ENCODE measurements at regions of chr19 and their contacts with region 1.

Region 1: DNA sequence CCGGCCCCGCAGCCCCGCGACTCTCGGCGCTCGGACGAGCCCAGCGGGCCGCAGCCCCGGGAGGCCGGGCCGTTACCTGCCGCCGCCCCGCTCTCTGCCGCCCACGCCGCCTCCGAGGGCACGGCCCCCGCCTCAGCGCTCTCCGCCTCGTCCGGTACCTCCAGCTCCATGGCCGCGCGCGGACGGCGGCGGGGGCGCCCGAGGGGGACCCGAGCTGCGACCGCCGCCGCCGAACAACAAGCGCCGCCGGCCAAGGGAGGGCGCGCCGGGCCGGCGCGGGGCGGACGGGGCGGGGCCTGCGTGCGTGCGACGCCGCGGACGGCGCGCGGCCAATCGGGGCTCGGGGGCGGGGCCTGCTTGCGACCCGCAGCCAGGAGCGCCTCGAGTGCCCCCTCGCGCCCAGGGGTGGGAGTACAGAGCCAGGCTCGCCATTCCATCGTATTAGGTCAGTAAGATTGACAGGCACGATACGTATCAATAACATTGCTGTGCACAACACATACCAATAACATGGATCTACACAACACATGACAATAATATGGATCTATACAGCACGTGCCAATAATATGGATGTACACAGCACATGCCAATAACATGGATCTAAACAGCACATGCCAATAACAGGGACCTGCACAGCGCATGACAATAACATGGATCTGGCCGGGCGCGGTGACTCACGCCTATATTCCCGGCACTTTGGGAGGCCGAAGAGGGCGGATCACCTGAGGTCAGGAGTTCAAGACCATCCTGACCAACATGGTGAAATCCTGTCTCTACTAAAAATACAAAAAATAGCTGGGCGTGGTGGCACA is at the start of gene PIP5K1C:
- DNase-seq: peak; percentile 47
- ATAC-seq: peak; percentile 85
- H3K4me3 ChIP-seq: peak within 1 kb of the TSS; percentile 88
- H3K27ac ChIP-seq: peak within 1 kb of the TSS; percentile 69
- H3K4me1 ChIP-seq: no peaks in the 10 kb centered on the region; the same call in 1 of the 2 replicates
- H3K27me3 ChIP-seq: no peaks in the 10 kb centered on the region
- CTCF ChIP-seq: peak; percentile 74 to 94 (median 78)
- EP300 ChIP-seq: no peak
- POLR2A ChIP-seq: peak; percentile 47; the same call in 1 of the 2 replicates
- RAD21 ChIP-seq: peak; percentile 78
- polyA plus RNA-seq, gene PIP5K1C: 0.39 to 0.46 TPM

Region 2: DNA sequence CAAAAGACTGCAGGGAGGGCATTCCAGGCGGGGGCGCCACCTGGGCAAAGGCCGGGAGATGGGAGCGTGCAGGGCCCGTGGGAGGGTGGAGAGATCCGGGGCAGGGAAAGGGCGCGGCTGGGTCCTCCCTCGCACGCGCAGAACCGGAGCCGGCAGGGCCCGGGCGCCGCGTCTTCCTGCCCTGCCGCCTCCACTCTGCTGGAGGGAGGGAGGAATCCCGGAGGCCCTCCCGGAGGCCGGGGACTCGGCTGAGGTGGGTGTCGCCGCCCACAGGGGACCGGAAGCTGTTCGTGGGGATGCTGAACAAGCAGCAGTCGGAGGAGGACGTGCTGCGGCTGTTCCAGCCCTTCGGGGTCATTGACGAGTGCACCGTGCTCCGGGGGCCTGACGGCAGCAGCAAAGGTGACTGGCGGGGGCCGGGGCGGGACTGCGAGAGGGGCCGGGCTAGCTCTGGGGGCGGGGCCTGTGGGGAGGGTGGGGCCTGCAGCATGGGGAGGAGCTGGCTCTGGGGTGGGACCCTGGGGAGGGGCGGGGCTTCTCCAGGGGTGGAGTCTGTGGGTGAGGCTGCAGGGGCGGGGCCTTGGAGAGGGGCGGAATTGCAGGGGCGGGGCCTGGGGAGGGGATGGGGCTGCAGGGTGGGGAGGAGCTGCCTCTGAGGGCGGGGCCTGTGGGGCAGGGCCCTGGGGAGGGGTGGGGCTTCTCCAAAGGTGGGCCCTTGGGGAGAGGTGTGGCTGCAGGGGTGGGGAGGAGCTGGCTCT is 424.7 kb before region 1 on chr19:
- CTCF ChIA-PET with region 1: no interaction called
- POLR2A ChIA-PET with region 1: no interaction called
- RAD21 ChIA-PET with region 1: no interaction called
- SMC1A ChIA-PET with region 1: no interaction called
- in situ Hi-C with region 1: no loop called
- intact Hi-C with region 1: no loop called
- DNase-seq: peak; percentile 23
- ATAC-seq: peak; percentile 90
- H3K4me3 ChIP-seq: peak overlapping the region; percentile 71
- H3K27ac ChIP-seq: no peak overlapping the region
- H3K4me1 ChIP-seq: peaks cover 6% of the 10 kb centered on the region
- H3K27me3 ChIP-seq: no peaks in the 10 kb centered on the region
- CTCF ChIP-seq: peak in 2 of 3 experiments; percentile 54 to 59; a peak in 3 of 6 replicates
- EP300 ChIP-seq: no peak
- POLR2A ChIP-seq: peak; percentile 46; the same call in 1 of the 2 replicates
- RAD21 ChIP-seq: no peak

Region 3: GRCh38 chr19:3660493-3661219 is 39.8 kb before region 1 on chr19:
- CTCF ChIA-PET with region 1: interaction called, 22 read pairs
- POLR2A ChIA-PET with region 1: no interaction called
- RAD21 ChIA-PET with region 1: interaction called, 6 read pairs
- SMC1A ChIA-PET with region 1: no interaction called
- in situ Hi-C with region 1: loop called (anchors 5 kb)
- intact Hi-C with region 1: no loop called
- DNase-seq: no peak
- ATAC-seq: no peak
- H3K4me3 ChIP-seq: no peak overlapping the region
- H3K27ac ChIP-seq: no peak overlapping the region
- H3K4me1 ChIP-seq: peaks cover 9% of the 10 kb centered on the region
- H3K27me3 ChIP-seq: no peaks in the 10 kb centered on the region
- CTCF ChIP-seq: no peak
- EP300 ChIP-seq: no peak
- POLR2A ChIP-seq: no peak
- RAD21 ChIP-seq: no peak

Region 4: GRCh38 chr19:3665681-3666544 is 34.5 kb before region 1 on chr19:
- CTCF ChIA-PET with region 1: interaction called, 22 read pairs
- POLR2A ChIA-PET with region 1: interaction called, 5 read pairs
- RAD21 ChIA-PET with region 1: interaction called, 6 read pairs
- SMC1A ChIA-PET with region 1: no interaction called
- in situ Hi-C with region 1: loop called (anchors 5 kb)
- intact Hi-C with region 1: no loop called
- DNase-seq: no peak
- ATAC-seq: peak; percentile 96
- H3K4me3 ChIP-seq: no peak overlapping the region
- H3K27ac ChIP-seq: no peak overlapping the region; the same call in 1 of the 2 replicates
- H3K4me1 ChIP-seq: peaks cover 11% of the 10 kb centered on the region
- H3K27me3 ChIP-seq: no peaks in the 10 kb centered on the region
- CTCF ChIP-seq: peak; percentile 82 to 97 (median 94)
- EP300 ChIP-seq: no peak
- POLR2A ChIP-seq: no peak
- RAD21 ChIP-seq: peak; percentile 84

Region 5: DNA sequence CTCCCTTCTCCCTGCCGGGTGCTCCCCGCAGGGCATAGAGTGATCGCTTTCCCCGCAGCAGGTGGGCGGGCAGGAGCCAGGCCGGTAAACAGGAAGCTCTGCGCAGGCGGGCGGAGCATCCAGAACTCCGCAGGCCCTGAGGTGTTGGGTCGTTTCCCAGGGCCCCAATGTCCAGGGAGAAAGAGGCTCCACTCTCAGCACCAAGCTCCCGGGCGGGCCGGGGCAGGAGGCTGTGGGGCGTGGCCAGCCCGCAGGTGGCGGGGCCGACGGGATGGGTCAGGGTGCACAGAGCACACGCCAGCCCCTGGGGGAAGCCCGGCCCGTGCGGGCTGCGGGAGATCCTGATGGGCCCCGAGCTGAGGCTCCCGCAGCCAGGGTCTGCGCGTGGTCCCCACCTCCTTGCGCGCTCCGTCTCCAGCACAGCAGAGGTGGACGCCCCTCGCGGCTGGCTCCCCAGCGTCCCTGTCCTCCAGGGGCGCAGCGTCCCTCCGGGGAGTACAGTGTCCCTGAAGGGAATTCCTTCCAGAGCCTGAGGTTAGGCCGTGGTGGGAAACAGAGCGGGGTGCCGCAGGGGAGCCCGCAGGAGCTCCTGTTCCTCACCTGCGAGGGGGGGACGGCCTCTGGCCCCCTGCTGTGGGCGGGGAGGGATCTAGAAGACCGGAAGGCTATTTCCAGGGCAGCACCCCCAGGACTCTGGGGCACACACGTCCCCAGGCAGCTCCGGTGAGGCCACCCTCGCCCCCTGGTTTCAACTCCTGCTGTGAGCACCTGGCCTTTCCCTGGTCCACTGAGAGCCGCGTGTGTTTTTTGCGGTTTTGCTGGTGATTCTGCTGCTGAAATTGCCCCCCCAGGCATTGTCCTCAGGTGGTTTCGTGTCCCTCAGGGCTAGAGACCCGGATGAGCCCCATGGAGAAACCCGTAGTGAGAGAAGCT is 12.4 kb before region 1 on chr19:
- CTCF ChIA-PET with region 1: interaction called, 8 read pairs
- POLR2A ChIA-PET with region 1: interaction called, 13 read pairs
- RAD21 ChIA-PET with region 1: interaction called, 5 read pairs
- SMC1A ChIA-PET with region 1: interaction called, 5 read pairs
- in situ Hi-C with region 1: no loop called
- intact Hi-C with region 1: no loop called
- DNase-seq: no peak
- ATAC-seq: peak; percentile 75
- H3K4me3 ChIP-seq: peak overlapping the region; percentile 74
- H3K27ac ChIP-seq: peak overlapping the region; percentile 68
- H3K4me1 ChIP-seq: peaks cover 28% of the 10 kb centered on the region
- H3K27me3 ChIP-seq: no peaks in the 10 kb centered on the region
- CTCF ChIP-seq: 0 out of 6 replicates have a peak, but pooled peaks of 1 of the 3 experiments have one; percentile 1
- EP300 ChIP-seq: no peak
- POLR2A ChIP-seq: peak; percentile 50
- RAD21 ChIP-seq: no peak